ENCODE measurements at regions of chr7 and their contacts with region 1.

Region 1: DNA sequence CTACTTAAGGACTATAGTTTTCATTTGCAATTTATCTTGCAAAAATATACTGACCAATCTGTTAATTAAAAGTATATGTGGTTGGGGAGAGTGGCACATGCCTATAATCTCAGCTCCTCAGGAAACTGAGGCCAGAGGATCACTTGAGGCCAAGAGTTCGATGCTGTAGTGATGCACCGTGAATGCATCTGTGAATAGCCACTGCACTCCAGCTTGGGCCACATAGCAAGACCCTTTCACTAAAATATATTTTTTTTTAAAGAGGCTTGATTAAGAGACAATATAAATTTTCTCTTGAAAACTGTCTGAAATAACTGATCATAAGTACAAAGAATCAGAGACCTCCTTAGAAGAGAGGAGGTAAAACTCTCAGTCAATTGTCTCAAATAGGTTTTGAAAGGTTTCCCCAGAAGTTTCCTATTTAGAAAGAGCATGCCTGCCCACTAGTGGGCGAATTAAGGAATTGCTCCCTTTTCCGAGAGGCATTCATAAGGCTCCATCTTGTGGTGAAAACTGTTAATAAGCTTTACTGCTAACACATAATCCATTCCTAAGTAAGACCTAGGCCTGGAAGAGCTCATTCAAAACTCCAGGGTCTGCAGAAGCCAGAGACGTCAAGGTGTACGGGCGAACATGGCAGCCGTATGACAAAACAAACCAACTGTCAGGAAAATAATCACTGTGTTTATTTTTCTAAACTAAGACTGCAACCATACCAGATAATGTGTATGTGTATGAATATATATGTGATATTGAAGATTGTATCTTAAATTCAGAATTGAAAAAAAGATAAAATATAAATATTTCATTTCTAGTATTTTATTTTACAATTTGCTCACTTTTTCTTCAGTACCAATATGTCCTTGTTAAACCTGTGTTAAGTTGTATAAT is 6.8 kb upstream of the TAS2R40 start:
- ATAC-seq: peak; percentile 45 to 87 (median 60)
- H3K4me3 ChIP-seq: no peak overlapping the region
- H3K27ac ChIP-seq: no peak overlapping the region
- H3K4me1 ChIP-seq: no peaks in the 10 kb centered on the region

Region 2: DNA sequence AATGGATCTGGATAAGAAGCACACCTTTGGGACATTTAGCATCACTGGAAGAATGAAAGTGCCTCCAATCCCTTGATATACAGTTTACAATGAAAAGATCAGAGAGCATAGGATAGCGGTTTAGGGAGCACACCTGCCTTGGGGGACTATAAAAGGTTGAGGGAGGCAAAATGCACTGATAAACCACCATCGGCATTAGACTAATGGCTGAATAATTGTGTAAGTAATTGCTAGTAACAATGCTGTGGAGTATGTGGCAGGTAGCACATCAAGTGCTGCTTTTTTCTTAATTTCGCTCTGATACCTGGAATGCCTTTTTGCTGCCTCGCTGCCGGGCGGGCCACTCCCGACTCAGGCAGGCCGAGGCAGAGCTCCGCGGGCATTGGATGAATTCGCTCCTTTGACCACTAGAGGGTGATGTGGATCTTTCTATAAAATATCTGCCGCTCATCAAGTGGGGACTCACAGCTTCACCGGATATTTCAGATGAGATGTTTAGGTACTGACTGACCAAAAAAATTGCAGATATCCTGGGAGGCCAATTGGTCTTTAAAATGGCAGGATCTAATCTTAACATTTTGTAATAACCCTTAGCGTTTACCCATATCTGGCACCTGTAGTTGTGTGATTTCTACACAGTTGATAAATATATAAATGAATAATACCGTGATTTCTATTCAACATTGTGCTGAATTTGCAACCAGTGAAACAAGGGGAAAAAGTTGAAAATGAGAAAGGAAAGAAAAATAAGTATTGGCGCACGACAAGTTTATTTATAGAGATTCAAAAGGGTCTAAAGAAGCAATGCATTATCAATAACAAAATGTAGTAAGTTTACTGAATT is 582.5 kb before region 1 on chr7:
- in situ Hi-C with region 1: loop called in 1 of 9 experiments (anchors 25 kb)
- ATAC-seq: peak; percentile 69 to 97 (median 84)
- H3K4me3 ChIP-seq: no peak overlapping the region
- H3K27ac ChIP-seq: no peak overlapping the region
- H3K4me1 ChIP-seq: no peaks in the 10 kb centered on the region

Region 3: GRCh38 chr7:142853739-142854371 is 361.2 kb before region 1 on chr7:
- in situ Hi-C with region 1: loop called in 5 of 9 experiments (anchors 25 kb)
- ATAC-seq: peak; percentile 46 to 75 (median 69)
- H3K4me3 ChIP-seq: peak overlapping the region; percentile 42 to 75 (median 51)
- H3K27ac ChIP-seq: no peak overlapping the region
- H3K4me1 ChIP-seq: peaks cover 0 to 3% of the 10 kb centered on the region in 2 donors

Region 4: DNA sequence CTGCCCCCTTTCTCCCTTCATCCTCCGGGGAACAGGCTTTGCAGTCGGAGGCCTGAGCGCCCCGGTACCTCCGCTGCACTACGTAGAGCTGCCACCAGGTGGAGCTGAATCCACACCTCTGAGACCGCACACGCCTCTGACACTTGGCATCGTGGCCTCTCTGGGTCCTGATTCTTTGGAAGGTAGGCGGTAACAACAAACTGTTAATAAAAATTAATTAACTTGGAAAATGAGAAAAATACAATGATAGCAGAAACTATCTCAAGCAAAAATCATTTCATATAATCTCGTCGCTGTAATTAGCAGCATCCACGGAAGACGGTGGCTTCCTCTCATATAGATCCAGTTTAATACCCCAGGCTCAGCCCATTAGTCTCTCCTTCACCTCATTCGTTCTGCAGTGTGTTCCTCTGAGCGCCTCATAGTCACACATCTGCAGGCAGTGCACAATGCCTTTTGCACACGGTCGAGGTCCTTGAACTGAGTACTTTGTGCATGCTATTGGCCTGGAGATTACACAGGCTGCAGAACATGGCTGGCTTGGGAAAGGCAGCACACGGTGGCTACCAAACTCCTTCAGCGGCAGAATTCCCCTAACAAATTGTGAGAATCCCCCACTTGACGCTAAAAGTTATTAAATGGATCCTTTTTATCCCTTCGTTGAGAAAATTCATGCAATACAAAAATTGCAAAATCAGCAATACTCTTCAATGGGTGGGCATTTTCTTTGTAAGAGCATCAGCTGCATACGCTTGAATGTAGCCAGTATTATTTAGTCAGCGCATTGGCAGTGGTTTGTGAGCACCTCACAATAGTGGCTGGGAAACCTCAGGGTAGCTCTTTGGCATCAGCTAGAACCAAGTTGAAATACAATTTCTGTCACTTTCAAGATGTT is 206.8 kb before region 1 on chr7:
- in situ Hi-C with region 1: loop called in 8 of 9 experiments (anchors 5 to 25 kb)
- ATAC-seq: peak; percentile 78 to 99 (median 86)
- H3K4me3 ChIP-seq: no peak overlapping the region
- H3K27ac ChIP-seq: no peak overlapping the region
- H3K4me1 ChIP-seq: no peaks in the 10 kb centered on the region

Region 5: DNA sequence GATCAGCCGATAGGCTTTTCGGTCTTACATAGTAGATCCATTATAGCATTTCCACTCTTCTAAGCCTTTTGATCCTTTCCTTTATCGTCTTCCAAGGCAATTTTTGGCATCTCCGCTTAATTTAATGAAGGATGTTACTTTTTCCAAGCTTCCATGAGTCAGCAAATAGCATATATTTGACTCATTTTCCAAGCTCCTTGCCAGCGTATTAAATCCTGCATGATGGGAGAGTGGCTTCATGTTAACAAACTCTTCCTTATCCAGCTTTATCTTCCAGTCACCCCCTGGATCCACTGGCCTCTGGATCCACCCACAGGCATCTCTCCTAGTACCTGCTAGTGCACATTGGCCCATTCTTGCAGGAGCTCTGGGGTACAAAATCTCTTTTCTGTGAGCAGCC is 201.1 kb before region 1 on chr7:
- in situ Hi-C with region 1: loop called in 8 of 9 experiments (anchors 5 to 25 kb)
- ATAC-seq: peak in 2 of 8 experiments; percentile 56 to 79
- H3K4me3 ChIP-seq: no peak overlapping the region
- H3K27ac ChIP-seq: no peak overlapping the region
- H3K4me1 ChIP-seq: no peaks in the 10 kb centered on the region

Region 6: DNA sequence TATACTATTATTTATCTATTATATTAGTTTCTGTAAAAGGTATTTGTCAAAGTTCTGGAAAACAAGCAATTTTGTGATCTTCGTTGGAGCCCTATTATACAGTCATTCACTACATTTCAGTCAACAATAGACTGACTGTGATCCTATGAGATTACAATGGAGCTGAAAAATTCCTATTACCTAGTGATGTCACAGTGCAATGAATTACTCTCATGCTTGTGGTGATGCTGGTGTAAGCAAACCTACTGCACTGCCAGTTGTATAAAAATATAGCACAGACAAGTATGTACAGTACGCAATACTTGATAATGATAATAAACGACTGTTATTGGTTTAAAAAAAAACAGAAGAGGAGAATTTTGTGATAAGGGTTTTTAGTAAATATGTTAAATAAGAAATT is 141.5 kb before region 1 on chr7:
- in situ Hi-C with region 1: no loop called
- ATAC-seq: no peak
- H3K4me3 ChIP-seq: no peak overlapping the region
- H3K27ac ChIP-seq: no peak overlapping the region
- H3K4me1 ChIP-seq: no peaks in the 10 kb centered on the region

Region 7: DNA sequence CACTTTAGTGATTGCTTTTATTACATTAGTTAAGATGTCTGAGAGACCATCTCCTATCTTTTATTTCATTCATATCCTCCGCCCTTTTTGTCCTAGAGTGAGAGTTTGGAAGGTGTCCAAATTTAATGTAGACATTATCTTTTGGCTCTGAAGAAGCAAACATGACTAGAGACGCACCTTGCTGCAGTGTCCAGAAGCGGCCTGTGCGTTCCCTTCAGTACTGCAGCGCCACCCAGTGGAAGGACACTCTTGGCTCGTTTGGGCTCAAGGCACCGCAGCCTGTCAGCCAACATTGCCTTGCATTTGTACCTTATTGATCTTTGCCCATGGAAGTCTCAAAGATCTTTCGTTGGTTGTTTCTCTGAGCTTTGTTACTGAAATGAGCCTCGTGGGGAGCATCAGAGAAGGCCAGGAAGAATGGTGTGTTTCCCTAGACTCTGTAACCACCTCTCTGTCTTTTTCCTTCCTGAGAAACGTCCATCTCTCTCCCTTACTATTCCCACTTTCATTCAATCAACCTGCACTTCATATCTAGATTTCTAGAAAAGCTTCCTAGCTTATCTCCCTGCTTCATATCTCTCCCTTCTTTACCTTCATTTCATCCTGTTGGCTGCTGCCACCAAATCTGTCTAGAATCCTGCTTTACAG is 90.5 kb after region 1 on chr7:
- in situ Hi-C with region 1: no loop called
- ATAC-seq: peak in 3 of 8 experiments; percentile 77 to 87 (median 82)
- H3K4me3 ChIP-seq: no peak overlapping the region
- H3K27ac ChIP-seq: no peak overlapping the region
- H3K4me1 ChIP-seq: no peaks in the 10 kb centered on the region

Measured in motor neuron (in vitro differentiated cells).